Upper lobe of right lung (tissue), 1 donor: ENCODE measurements at regions of chr14 and their contacts with region 1.

Region 1: DNA sequence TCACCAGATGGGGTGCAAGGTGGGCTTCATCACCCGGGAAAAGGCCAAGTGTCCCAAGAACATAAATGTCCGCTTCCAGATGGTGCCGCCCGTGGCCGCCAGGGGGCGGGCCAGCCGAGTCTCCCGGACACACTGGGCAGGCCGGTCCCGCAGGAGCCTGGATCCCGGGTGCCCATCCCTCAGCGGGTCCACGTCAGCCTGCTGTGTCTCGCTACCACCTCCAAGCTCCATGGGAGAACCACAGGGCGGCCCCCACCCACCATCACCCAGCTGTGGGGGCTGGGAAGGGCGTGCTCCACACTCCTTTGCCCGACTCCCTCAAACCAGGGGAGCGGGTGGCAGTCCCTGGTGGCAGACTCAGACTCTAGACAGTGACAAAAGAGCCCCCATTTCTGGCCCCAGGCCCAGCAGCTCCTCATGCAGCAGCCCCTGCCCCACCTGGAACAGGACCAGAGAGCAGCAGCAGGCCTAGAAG is 22.0 kb upstream of the NUDT14 start:
- DNase-seq: peak; percentile 90
- ATAC-seq: peak; percentile 68
- H3K4me3 ChIP-seq: no peak overlapping the region
- H3K27ac ChIP-seq: no peak overlapping the region
- H3K4me1 ChIP-seq: peaks cover 40% of the 10 kb centered on the region
- H3K27me3 ChIP-seq: peaks cover 17% of the 10 kb centered on the region
- CTCF ChIP-seq: peak; percentile 92

Region 2: GRCh38 chr14:105086833-105087307 is 116.2 kb before region 1 on chr14:
- intact Hi-C with region 1: no loop called
- DNase-seq: peak; percentile 92
- ATAC-seq: peak; percentile 70
- H3K4me3 ChIP-seq: peak overlapping the region; percentile 58
- H3K27ac ChIP-seq: peak overlapping the region; percentile 63
- H3K4me1 ChIP-seq: peaks cover 38% of the 10 kb centered on the region
- H3K27me3 ChIP-seq: no peaks in the 10 kb centered on the region
- CTCF ChIP-seq: peak; percentile 84

Region 3: GRCh38 chr14:105123981-105124765 is 78.9 kb before region 1 on chr14:
- intact Hi-C with region 1: no loop called
- DNase-seq: no peak
- ATAC-seq: no peak
- H3K4me3 ChIP-seq: no peak overlapping the region
- H3K27ac ChIP-seq: no peak overlapping the region
- H3K4me1 ChIP-seq: no peaks in the 10 kb centered on the region
- H3K27me3 ChIP-seq: peaks cover 6% of the 10 kb centered on the region
- CTCF ChIP-seq: no peak

Region 4: DNA sequence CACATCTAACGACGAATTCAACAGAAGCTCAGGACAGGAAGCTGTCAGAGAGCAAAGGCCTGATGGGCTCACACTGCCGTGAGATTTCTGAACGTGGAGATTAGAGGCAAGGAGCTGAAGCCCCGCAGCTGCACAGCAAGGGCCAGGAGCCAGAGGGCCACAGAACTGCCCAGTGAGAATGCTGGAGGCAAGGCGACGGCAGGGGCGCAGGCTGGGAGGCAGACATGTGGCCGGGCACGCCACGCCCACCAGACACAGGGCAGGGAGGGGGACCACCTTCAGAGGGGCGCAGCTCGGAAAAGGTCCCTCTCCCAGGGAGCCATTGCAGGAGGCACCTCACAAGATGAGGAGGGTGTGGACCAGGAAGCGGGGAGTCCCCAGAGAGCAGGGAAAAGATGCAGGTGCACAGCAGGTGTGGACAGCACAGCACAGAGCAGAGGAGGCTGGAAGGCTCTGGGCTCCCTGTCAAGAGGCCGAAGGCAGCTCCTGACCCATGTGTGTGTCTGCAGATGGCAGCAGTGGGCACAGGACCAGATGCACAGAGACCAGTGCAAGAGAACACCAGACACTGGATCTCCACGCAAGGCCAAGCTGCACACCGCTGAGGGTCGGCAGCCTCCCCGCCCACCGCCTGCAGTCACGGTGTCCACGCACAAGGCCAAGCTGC is 68.3 kb after region 1 on chr14:
- intact Hi-C with region 1: no loop called
- DNase-seq: no peak
- ATAC-seq: no peak
- H3K4me3 ChIP-seq: no peak overlapping the region
- H3K27ac ChIP-seq: no peak overlapping the region
- H3K4me1 ChIP-seq: peaks cover 8% of the 10 kb centered on the region
- H3K27me3 ChIP-seq: no peaks in the 10 kb centered on the region
- CTCF ChIP-seq: no peak

Region 5: DNA sequence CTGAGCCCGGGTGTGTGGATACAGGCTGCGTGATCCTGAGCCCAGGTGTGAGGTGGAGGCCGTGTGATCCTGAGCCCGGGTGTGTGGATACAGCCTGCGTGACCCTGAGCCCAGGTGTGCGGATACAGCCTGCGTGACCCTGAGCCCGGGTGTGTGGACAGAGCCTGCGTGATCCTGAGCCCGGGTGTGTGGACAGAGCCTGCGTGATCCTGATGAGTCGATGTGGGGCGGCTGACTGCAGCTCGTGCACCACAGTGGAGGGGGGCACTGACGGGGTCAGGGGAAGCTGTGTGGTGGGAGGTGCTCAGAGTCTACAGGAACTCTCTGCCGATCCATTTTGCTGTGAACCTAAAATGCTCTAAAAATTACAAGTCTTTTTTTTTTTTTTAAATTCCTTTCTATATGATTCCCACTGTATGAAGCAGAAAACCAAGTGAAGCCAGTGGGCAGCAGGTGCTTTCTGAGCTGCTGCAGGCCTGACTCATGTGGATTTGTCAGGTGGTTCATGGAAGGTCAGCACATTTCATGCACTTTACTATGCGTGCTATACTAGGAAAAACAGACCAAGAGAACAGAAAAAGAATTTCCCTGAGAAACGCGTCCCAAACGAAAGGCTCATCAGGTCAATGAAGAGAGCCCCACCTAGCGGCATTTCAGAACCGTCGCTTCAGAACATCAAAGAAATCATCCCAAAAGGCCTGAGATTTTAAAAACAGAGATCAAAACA is 78.4 kb after region 1 on chr14:
- intact Hi-C with region 1: loop called (anchors 10 kb)
- DNase-seq: no peak
- ATAC-seq: peak; percentile 57
- H3K4me3 ChIP-seq: no peak overlapping the region
- H3K27ac ChIP-seq: no peak overlapping the region
- H3K4me1 ChIP-seq: no peaks in the 10 kb centered on the region
- H3K27me3 ChIP-seq: no peaks in the 10 kb centered on the region
- CTCF ChIP-seq: peak; percentile 57

Region 6: GRCh38 chr14:105358140-105358846 is 155.2 kb after region 1 on chr14:
- intact Hi-C with region 1: loop called (anchors 5 kb)
- DNase-seq: no peak
- ATAC-seq: peak; percentile 23
- H3K4me3 ChIP-seq: no peak overlapping the region
- H3K27ac ChIP-seq: no peak overlapping the region
- H3K4me1 ChIP-seq: no peaks in the 10 kb centered on the region
- H3K27me3 ChIP-seq: no peaks in the 10 kb centered on the region
- CTCF ChIP-seq: no peak

Region 7: DNA sequence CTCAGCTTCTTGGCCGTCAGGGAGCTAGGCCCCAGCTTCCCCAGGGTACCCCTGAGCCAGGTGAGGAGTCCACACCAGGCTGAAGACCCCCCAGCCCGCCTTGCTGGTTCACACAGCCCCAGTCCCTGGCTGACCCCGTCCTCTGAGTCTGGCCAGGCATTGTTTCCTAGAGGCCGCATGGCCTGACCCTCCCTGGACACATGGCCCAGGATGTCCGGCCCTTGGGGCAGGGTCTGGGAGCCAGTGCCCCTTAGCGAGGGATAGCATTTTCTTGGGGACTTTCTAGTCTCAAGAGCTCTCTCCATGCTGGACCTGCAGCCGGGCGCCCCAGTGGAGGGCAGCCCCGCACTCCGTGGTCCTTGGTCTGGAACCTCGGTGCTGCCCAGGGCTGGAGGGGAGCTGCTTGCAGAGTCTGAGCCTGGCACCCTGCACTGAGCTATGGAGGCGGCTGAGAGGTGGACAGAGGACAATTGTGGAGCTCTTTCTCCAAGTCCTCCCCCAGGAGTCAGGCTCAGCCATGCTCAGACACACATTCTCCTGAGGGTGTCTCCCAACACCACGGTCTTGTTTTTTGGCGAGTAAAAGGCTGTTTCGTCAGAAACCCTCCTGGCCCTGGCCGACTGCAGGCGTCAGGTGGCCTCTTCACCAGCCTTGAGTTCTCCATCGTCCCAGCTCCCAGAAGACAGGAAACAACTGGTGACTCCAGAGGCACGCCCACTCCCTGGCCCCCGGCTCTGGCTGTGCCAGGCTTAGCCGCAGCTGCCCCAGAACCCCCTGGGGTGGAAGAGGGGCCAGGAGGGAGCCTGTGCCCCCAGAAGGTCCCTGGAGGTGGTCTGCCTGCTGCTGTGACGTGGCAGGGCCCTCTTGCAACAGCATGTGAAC is 253.9 kb after region 1 on chr14:
- intact Hi-C with region 1: no loop called
- DNase-seq: no peak
- ATAC-seq: no peak
- H3K4me3 ChIP-seq: no peak overlapping the region
- H3K27ac ChIP-seq: no peak overlapping the region
- H3K4me1 ChIP-seq: no peaks in the 10 kb centered on the region
- H3K27me3 ChIP-seq: no peaks in the 10 kb centered on the region
- CTCF ChIP-seq: no peak